ENCODE measurements at regions of chr14 and their contacts with region 1.

Region 1: DNA sequence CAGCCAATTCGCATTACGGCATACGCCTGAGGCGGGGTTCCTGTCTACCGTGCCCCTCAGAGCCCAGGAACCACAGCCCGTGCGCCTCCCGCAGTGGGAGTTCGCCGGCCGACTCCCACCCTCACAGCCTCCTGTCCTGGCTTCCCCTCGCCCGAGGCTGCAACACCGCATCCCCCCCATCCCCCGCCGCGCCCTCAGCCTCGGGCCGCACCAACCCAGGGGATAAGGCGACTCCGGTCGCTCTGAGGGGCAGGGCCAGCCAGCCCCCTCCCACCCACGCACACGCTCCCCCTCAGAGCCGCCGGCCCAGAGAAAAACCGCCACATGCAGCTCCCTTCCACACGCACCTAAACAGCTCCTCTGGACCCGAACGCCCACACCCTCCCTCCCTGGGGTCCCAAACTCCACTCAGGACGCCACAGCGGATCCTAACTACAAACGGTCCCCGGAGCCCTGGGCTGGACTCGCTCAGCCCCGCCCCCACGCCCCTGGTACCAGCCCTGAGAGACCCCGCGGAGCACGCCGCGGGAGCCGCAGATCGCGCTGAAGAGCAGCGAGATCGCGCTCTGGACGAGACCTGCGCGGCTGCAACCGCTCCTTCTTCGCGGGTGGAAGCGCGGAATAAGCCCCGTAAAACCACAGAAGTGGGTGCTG is at the start of gene C14orf39:
- DNase-seq: peak; percentile 57
- ATAC-seq: peak; percentile 33
- H3K4me3 Mint-ChIP-seq: peak within 1 kb of the TSS; percentile 24
- H3K27ac Mint-ChIP-seq: no peak within 1 kb of the TSS
- H3K4me1 Mint-ChIP-seq: peaks cover 6% of the 10 kb centered on the region
- H3K27me3 Mint-ChIP-seq: peaks cover 24% of the 10 kb centered on the region
- total RNA-seq, gene C14orf39: not detected

Region 2: DNA sequence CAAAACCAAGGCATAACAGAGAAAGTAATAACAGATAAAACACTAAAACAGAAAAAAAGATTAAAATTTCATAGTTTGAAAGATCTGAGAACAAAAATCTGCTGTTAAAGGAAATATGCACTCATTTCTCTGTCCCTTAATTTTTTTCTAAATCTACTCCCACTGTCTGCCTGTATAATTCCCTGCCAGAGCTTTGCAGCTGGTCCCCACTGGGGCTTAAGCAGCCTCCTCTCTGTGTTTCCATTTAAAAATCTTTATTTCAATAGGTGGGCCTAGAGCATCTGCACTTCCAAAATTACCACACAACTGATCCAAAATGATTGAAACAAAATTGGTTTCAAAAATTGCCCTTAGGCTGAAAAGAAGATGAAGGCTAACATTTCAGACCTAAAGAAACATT is 16.8 kb after region 1 on chr14:
- CTCF ChIA-PET with region 1: no interaction called
- POLR2A ChIA-PET with region 1: no interaction called
- intact Hi-C with region 1: loop called in 1 of 2 experiments (anchors 2 kb)
- DNase-seq: no peak
- ATAC-seq: no peak
- H3K4me3 Mint-ChIP-seq: no peak overlapping the region
- H3K27ac Mint-ChIP-seq: no peak overlapping the region
- H3K4me1 Mint-ChIP-seq: peaks cover 4% of the 10 kb centered on the region
- H3K27me3 Mint-ChIP-seq: peaks cover 44% of the 10 kb centered on the region

Region 3: DNA sequence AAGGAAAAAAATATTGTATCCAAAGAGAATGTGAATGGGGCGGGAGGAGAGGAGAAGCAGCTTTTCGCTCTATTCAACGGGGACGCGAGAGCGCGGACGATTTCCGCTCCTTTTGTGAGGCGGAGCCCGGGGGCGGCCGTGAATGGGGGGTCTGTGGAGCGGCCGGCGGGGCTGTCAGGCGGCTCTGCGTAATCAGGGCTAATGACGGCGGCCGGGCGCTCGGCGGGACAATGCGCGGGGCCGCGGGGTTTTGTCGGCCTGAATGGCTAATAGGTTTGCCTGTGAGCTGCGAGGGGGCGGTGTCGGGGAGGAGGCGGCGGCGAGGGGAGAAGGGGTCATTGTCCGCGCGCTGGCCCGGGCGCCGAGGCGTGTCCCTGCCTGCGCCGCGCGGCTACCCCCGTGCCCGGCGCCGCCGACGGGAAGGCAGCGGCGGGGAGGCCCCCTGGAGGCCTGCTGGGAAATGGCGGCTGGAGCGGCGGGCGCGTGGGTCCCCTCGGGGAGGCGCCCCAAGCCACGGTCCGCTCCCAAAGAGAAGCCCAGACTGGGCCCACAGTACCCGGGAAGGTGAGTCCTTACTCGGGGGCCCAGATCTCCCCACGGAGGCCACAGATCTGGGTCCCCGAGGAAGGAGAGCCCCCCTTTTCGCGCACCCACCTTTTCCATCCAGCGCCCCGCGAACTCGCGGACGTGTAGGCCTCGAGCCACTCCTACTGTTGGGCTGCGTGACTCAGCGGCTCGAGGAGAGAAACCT is 29.2 kb after region 1 on chr14:
- CTCF ChIA-PET with region 1: interaction called, 4 read pairs
- POLR2A ChIA-PET with region 1: no interaction called
- intact Hi-C with region 1: loop called in 1 of 2 experiments (anchors 2 kb)
- DNase-seq: peak; percentile 50
- ATAC-seq: peak; percentile 53
- H3K4me3 Mint-ChIP-seq: peak overlapping the region; percentile 40
- H3K27ac Mint-ChIP-seq: no peak overlapping the region
- H3K4me1 Mint-ChIP-seq: peaks cover 20% of the 10 kb centered on the region
- H3K27me3 Mint-ChIP-seq: peaks cover 52% of the 10 kb centered on the region

Measured in activated CD4-positive, alpha-beta T cell treated with anti-CD3 and anti-CD28 coated beads for 36 hours (primary cell).